Activated CD8-positive, alpha-beta memory T cell treated with anti-CD3 and anti-CD28 coated beads, Interleukin-2, amount 10 ng/mL, durations not matched to agents 7 days and 5 days (primary cell): ENCODE measurements at regions of chr14 and their contacts with region 1.

Region 1: GRCh38 chr14:72516936-72517700 is 376.8 kb downstream of the DPF3 start:
- DNase-seq: peak; percentile 90
- ATAC-seq: peak; percentile 35
- H3K4me3 Mint-ChIP-seq: no peak overlapping the region
- H3K27ac Mint-ChIP-seq: peak overlapping the region; percentile 64
- H3K4me1 Mint-ChIP-seq: peaks cover 79% of the 10 kb centered on the region
- H3K27me3 Mint-ChIP-seq: peaks cover 1% of the 10 kb centered on the region

Region 2: DNA sequence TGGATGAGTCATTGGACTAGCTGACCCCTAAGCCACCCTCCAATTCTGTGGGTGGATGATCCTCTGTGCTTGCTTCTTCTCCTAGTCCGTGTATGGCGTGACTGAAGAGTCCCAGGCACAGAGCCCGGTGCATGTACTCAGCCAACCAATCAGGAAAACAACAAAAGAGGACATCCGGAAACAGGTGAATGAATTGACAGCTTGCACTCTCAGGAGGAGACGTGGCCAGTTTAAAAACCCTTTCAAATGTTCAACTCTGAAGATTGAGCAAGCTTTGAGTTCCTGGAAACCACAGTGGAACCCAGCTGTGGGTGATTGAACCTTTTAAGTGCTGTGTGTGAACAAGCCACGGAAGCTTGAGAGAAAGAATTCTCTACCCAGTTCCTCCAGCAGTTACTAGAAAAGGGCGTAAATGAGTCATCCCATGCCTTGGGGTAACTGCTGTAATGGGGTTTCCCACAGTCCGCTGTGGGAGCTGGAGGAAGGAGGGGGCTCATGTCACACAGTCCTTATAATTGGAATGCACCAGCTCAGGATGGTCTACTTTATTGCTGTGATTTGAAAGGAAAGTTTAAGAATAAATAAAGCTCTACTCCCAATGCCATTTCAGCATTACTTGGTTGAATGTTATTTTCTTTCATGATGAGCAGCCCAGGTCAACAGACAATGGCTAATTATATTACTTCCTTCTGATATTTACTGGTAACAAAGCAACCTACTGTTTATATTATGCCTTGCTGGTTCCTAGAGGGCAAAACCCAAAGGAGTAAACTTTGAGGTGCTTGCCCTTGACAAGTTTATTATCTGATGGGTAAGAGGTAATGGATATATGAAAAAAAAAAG is 40.2 kb before region 1 on chr14:
- CTCF ChIA-PET with region 1: interaction called, 12 read pairs
- DNase-seq: peak; percentile 96
- ATAC-seq: peak; percentile 88
- H3K4me3 Mint-ChIP-seq: peak overlapping the region; percentile 51
- H3K27ac Mint-ChIP-seq: peak overlapping the region; percentile 94
- H3K4me1 Mint-ChIP-seq: peaks cover 78% of the 10 kb centered on the region
- H3K27me3 Mint-ChIP-seq: no peaks in the 10 kb centered on the region

Region 3: DNA sequence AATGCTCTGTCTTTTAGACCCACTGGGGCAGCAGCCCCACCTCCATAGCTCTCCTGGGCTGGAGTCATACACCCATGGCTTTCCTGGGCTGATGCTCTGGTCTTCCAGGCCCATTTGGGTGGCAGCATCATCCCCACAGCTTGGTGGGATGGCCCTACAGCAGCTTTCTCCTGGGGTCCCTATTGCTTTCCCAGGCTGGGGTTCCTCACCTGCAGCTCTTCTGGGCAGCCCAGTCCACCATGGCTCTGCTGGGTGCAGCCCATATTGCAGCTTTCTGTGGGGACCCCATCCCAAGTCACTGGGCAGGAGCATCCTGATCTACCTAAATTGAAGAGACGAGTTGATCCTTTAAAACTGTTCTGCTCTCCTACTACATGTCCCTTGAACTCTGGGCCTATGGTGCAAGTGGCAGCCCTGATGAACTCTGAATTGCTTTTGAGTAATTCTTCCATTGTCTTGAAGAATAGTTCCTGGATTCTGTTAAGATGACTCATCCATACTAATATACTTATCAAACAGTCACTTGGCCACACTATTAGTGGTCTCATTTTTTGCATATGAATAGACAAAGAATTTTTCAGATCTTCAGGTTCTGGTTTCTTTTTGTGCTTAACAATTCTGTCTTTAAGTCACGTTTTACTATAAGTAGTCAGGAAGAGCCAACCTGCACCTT is 13.3 kb before region 1 on chr14:
- CTCF ChIA-PET with region 1: interaction called, 27 read pairs
- DNase-seq: no peak
- ATAC-seq: no peak
- H3K4me3 Mint-ChIP-seq: no peak overlapping the region
- H3K27ac Mint-ChIP-seq: no peak overlapping the region
- H3K4me1 Mint-ChIP-seq: peaks cover 2% of the 10 kb centered on the region
- H3K27me3 Mint-ChIP-seq: peaks cover 28% of the 10 kb centered on the region

Region 4: DNA sequence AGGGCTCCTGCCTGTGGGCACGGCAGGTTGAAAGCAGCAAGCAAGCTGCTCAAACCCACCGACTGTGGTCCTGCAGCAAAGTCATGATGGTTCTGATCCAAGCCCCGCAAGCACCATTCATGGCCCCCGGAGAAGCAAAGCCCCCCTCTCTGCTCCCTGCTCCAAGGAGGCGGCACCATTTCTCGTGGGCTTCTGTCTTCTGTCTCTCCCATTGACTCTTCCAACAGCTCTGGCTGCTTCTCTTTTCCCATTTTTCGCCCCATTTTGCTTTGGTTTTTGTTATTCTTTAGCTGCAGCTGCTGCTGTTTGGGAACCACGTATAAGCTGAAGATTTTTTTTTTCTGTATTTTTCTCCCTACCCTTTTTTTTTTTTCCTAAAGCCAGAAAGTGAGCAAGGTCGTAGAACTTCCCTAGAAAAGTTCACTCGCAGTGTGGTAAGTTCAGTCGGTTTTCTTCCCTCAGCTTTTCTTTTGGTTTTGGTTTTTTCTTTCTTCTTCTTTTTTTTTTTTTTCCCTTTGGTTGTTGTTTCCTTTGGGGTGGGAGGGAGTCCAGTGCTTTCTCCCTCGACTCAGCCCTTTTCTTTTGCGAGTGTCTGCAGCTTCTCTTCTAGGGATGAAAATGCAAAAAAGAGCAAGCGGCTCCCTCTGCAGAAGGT is 22.7 kb after region 1 on chr14:
- CTCF ChIA-PET with region 1: interaction called, 10 read pairs
- DNase-seq: no peak
- ATAC-seq: no peak
- H3K4me3 Mint-ChIP-seq: no peak overlapping the region
- H3K27ac Mint-ChIP-seq: no peak overlapping the region
- H3K4me1 Mint-ChIP-seq: peaks cover 39% of the 10 kb centered on the region
- H3K27me3 Mint-ChIP-seq: peaks cover 68% of the 10 kb centered on the region

Region 5: GRCh38 chr14:72893636-72894321 is 376.7 kb after region 1 on chr14 and contains the start of gene DPF3:
- CTCF ChIA-PET with region 1: interaction called, 69 read pairs
- DNase-seq: peak; percentile 98
- ATAC-seq: peak; percentile 98
- H3K4me3 Mint-ChIP-seq: peak within 1 kb of the TSS; percentile 83
- H3K27ac Mint-ChIP-seq: peak within 1 kb of the TSS; percentile 51
- H3K4me1 Mint-ChIP-seq: peaks cover 27% of the 10 kb centered on the region
- H3K27me3 Mint-ChIP-seq: peaks cover 66% of the 10 kb centered on the region
- total RNA-seq, gene DPF3: 10.2 to 12.2 TPM

Region 6: GRCh38 chr14:72948481-72949138 is 431.5 kb after region 1 on chr14:
- CTCF ChIA-PET with region 1: interaction called, 107 read pairs
- DNase-seq: peak; percentile 77
- ATAC-seq: peak; percentile 41
- H3K4me3 Mint-ChIP-seq: no peak overlapping the region
- H3K27ac Mint-ChIP-seq: peak overlapping the region; percentile 52
- H3K4me1 Mint-ChIP-seq: peaks cover 21% of the 10 kb centered on the region
- H3K27me3 Mint-ChIP-seq: no peaks in the 10 kb centered on the region